ENCODE measurements at regions of chr5 and their contacts with region 1.

Region 1: DNA sequence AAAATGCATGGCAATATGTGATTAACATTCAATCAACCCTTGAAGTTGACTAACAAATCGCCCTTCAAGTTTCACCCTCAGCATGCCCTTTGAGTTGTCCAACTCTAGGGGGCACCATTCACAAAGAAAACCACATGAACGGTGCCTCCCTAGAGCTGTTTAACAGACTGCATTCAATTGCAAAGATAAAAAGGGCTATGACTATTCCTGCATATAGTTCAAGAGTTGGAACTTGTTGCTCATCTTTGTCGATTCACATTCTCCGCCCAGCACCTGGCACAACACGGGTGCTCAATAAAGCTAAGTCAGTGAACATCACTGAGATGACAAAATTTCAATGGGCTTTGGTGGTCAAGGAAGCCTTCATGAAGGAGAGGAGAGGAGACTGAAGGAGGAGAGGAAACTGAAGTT is 69.6 kb upstream of the SLC30A5 start:
- DNase-seq: peak; percentile 56 to 80 (median 60)
- ATAC-seq: peak; percentile 96
- H3K4me3 ChIP-seq: no peak overlapping the region
- H3K27ac ChIP-seq: no peak overlapping the region
- H3K4me1 ChIP-seq: peaks cover 0 to 5% of the 10 kb centered on the region in 2 experiments; a peak in 1 of 5 replicates
- H3K27me3 ChIP-seq: peaks cover 4 to 6% of the 10 kb centered on the region in 2 experiments; a peak in 2 of 5 replicates
- CTCF ChIP-seq: peak; percentile 72 to 92 (median 82)
- EP300 ChIP-seq: no peak
- POLR2A ChIP-seq: no peak
- RAD21 ChIP-seq: peak; percentile 92 to 94

Region 2: GRCh38 chr5:68149189-68149588 is 875.1 kb before region 1 on chr5:
- CTCF ChIA-PET with region 1: no interaction called
- POLR2A ChIA-PET with region 1: no interaction called
- in situ Hi-C with region 1: no loop called
- intact Hi-C with region 1: no loop called
- DNase-seq: no peak
- ATAC-seq: no peak
- H3K4me3 ChIP-seq: no peak overlapping the region
- H3K27ac ChIP-seq: no peak overlapping the region
- H3K4me1 ChIP-seq: no peaks in the 10 kb centered on the region
- H3K27me3 ChIP-seq: peaks cover 0 to 10% of the 10 kb centered on the region in 2 experiments; a peak in 2 of 5 replicates
- CTCF ChIP-seq: no peak
- EP300 ChIP-seq: no peak
- POLR2A ChIP-seq: no peak
- RAD21 ChIP-seq: no peak

Region 3: GRCh38 chr5:69083412-69083811 is 59.2 kb after region 1 on chr5:
- CTCF ChIA-PET with region 1: interaction called, 3 read pairs
- POLR2A ChIA-PET with region 1: no interaction called
- in situ Hi-C with region 1: no loop called
- intact Hi-C with region 1: loop called (anchors 1 kb)
- DNase-seq: peak in 3 of 4 experiments; percentile 29 to 75 (median 45)
- ATAC-seq: peak; percentile 96
- H3K4me3 ChIP-seq: no peak overlapping the region
- H3K27ac ChIP-seq: no peak overlapping the region
- H3K4me1 ChIP-seq: peaks cover 0 to 19% of the 10 kb centered on the region in 2 experiments; a peak in 3 of 5 replicates
- H3K27me3 ChIP-seq: no peaks in the 10 kb centered on the region
- CTCF ChIP-seq: peak; percentile 59 to 80 (median 65)
- EP300 ChIP-seq: 0 out of 2 replicates have a peak, but pooled peaks have one; percentile 16
- POLR2A ChIP-seq: no peak
- RAD21 ChIP-seq: peak; percentile 57 to 82

Region 4: GRCh38 chr5:69334793-69335268 is 310.6 kb after region 1 on chr5:
- CTCF ChIA-PET with region 1: no interaction called
- POLR2A ChIA-PET with region 1: no interaction called
- in situ Hi-C with region 1: no loop called
- intact Hi-C with region 1: loop called (anchors 10 kb)
- DNase-seq: peak; percentile 51 to 89 (median 70)
- ATAC-seq: peak; percentile 93
- H3K4me3 ChIP-seq: no peak overlapping the region
- H3K27ac ChIP-seq: no peak overlapping the region
- H3K4me1 ChIP-seq: peaks cover 7 to 33% of the 10 kb centered on the region in 2 experiments; a peak in 4 of 5 replicates
- H3K27me3 ChIP-seq: no peaks in the 10 kb centered on the region
- CTCF ChIP-seq: peak; percentile 80 to 93 (median 82)
- EP300 ChIP-seq: no peak
- POLR2A ChIP-seq: no peak
- RAD21 ChIP-seq: peak; percentile 48 to 86; a peak in 3 of 4 replicates

Measured in K562 (cell line).